PC-9 (cell line): ENCODE measurements at regions of chr9 and their contacts with region 1.

Region 1: GRCh38 chr9:33452828-33453271 is 5.5 kb upstream of the AQP3 start:
- DNase-seq: peak; percentile 72 to 85
- H3K4me3 ChIP-seq: no peak overlapping the region
- H3K27ac ChIP-seq: peak overlapping the region; percentile 44
- H3K4me1 ChIP-seq: peaks cover 25% of the 10 kb centered on the region
- H3K27me3 ChIP-seq: no peaks in the 10 kb centered on the region
- CTCF ChIP-seq: peak; percentile 86

Region 2: GRCh38 chr9:33415501-33416038 is 37.3 kb before region 1 on chr9:
- CTCF ChIA-PET with region 1: interaction called, 11 read pairs
- POLR2A ChIA-PET with region 1: no interaction called
- intact Hi-C with region 1: loop called (anchors 5 kb)
- DNase-seq: peak; percentile 80 to 95
- H3K4me3 ChIP-seq: no peak overlapping the region
- H3K27ac ChIP-seq: peak overlapping the region; percentile 22; the same call in 1 of the 2 replicates
- H3K4me1 ChIP-seq: peaks cover 27% of the 10 kb centered on the region
- H3K27me3 ChIP-seq: no peaks in the 10 kb centered on the region
- CTCF ChIP-seq: peak; percentile 83

Region 3: DNA sequence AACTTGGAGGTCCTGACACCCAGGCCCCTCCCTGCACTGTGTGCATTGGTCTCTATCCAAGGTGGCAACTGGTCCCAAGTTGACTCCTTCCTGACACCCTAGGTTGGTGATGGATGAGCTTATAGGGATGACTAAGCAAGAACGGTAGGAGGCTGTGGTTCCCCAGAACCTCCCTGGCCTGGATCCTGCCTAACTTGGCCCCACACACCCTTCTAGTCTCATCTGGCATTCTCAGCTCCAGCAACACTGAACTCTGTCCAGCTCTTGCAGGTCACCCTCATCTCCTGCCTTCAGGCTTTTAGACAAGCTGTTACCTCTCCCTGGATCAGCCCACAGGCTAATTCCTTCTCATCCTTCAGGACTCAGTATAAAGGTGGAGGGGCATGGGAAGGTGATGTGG is 21.9 kb before region 1 on chr9:
- CTCF ChIA-PET with region 1: interaction called, 10 read pairs
- POLR2A ChIA-PET with region 1: no interaction called
- intact Hi-C with region 1: no loop called
- DNase-seq: peak in 1 of 2 experiments; percentile 35
- H3K4me3 ChIP-seq: no peak overlapping the region
- H3K27ac ChIP-seq: no peak overlapping the region
- H3K4me1 ChIP-seq: peaks cover 13% of the 10 kb centered on the region
- H3K27me3 ChIP-seq: no peaks in the 10 kb centered on the region
- CTCF ChIP-seq: no peak